Aorta (tissue), 5 donors: ENCODE measurements at regions of chr11 and their contacts with region 1.

Region 1: GRCh38 chr11:88337181-88337986 is at the start of gene CTSC:
- DNase-seq: peak; percentile 97 to 98
- ATAC-seq: peak; percentile 96
- H3K4me3 ChIP-seq: peak within 1 kb of the TSS; percentile 28 to 43
- H3K27ac ChIP-seq: no peak within 1 kb of the TSS
- H3K4me1 ChIP-seq: peaks cover 0 to 2% of the 10 kb centered on the region in 2 donors
- H3K27me3 ChIP-seq: no peaks in the 10 kb centered on the region
- total RNA-seq, gene CTSC: 106 to 176 TPM

Region 2: DNA sequence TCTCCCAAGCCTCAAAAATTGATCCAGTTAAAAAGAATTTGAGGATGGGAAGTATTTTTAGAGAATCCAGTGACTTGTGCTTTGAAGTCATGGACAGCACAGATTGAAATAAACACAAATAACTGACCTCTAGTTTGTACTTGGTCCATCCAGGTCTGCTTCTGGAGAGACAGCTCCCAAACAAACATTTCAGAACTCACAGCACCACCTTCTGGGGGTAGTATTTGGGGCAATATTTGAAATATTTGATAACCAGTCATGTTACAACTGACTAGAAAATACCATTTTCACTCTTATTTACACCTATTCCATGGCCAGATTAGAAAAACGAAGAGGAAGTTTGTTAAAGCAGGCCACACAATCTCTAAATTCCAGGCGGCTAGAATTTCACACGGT is 56.1 kb before region 1 on chr11:
- intact Hi-C with region 1: loop called in 1 of 2 experiments (anchors 5 kb)
- DNase-seq: no peak
- ATAC-seq: no peak
- H3K4me3 ChIP-seq: no peak overlapping the region
- H3K27ac ChIP-seq: no peak overlapping the region
- H3K4me1 ChIP-seq: peaks cover 0 to 5% of the 10 kb centered on the region in 2 donors
- H3K27me3 ChIP-seq: no peaks in the 10 kb centered on the region

Region 3: DNA sequence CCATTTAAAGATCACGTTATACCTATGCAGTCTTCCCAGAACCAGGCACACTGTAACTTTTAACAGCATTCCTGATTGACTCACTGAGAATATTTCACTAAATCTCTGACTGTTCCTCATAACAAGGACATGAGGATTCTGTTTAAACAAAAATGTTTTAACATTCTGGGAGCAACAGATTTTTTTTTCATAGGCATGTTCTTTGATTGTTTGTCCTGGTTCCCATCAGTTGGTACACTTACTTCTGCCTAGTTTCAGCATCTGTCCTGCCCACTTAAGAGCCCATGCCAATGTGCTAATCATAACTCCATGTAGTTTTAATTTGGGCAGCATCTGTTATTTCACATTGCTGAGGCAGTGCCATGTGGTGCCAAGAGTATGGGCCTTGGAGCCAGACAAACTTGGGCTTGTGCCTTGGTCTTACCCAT is 138.6 kb after region 1 on chr11:
- intact Hi-C with region 1: loop called in 1 of 2 experiments (anchors 5 kb)
- DNase-seq: peak in 1 of 2 donors; percentile 50
- ATAC-seq: no peak
- H3K4me3 ChIP-seq: no peak overlapping the region
- H3K27ac ChIP-seq: no peak overlapping the region
- H3K4me1 ChIP-seq: peaks cover 0 to 6% of the 10 kb centered on the region in 2 donors
- H3K27me3 ChIP-seq: no peaks in the 10 kb centered on the region

Region 4: GRCh38 chr11:88535916-88536547 is 198.6 kb after region 1 on chr11:
- intact Hi-C with region 1: loop called in 1 of 2 experiments (anchors 10 kb)
- DNase-seq: no peak
- ATAC-seq: no peak
- H3K4me3 ChIP-seq: no peak overlapping the region
- H3K27ac ChIP-seq: no peak overlapping the region
- H3K4me1 ChIP-seq: no peaks in the 10 kb centered on the region
- H3K27me3 ChIP-seq: no peaks in the 10 kb centered on the region